ENCODE measurements at regions of chrX and their contacts with region 1.

Region 1: GRCh38 chrX:120499301-120500072 is 30.4 kb upstream of the LAMP2 start:
- DNase-seq: no peak
- ATAC-seq: no peak
- H3K4me3 ChIP-seq: no peak overlapping the region
- H3K4me3 Mint-ChIP-seq: no peak overlapping the region
- H3K27ac ChIP-seq: no peak overlapping the region
- H3K27ac Mint-ChIP-seq: peak overlapping the region in 1 of 2 donors; percentile 27
- H3K4me1 ChIP-seq: peaks cover 5% of the 10 kb centered on the region
- H3K4me1 Mint-ChIP-seq: peaks cover 6% of the 10 kb centered on the region in 2 donors
- H3K27me3 ChIP-seq: no peaks in the 10 kb centered on the region
- H3K27me3 Mint-ChIP-seq: no peaks in the 10 kb centered on the region
- CTCF ChIP-seq: no peak

Region 2: DNA sequence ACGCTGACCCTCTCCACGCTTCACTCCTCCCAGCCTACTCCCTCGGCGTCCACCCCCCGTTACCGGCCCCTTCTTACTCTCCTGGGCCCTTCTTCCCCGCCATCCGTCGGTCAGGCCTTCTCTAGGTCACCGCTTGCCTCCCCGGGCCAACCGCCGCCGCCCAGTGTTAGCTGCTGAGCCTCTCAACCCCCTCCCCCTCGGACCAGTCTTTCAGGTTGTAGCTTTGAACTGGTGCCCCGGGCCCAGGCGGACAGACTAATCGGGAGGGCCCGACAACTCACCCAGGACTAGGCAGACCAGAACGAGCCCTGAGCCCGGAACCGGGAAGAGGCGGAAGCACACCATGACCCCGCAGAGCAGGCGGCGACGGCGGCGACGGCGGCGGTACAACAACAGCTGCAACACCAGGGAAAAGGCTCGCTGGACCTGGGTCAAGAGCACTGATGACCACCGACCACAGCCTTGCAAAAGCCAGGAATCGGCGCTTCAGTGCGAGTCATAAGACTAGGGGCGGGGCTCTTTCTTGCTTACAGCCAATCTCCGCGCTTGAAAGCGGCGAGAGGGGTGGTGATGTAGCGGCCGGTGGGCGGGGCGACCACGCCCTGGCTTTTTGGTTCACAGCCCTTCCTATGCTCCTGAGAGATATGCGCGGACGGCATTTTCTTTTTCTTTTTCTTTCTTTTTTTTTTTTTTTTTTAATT is 30.5 kb before region 1 on chrX and contains the start of gene LAMP2:
- intact Hi-C with region 1: no loop called
- DNase-seq: peak; percentile 74 to 88
- ATAC-seq: peak; percentile 96 to 97 (median 96)
- H3K4me3 ChIP-seq: peak within 1 kb of the TSS; percentile 96
- H3K4me3 Mint-ChIP-seq: peak within 1 kb of the TSS; percentile 91
- H3K27ac ChIP-seq: peak within 1 kb of the TSS; percentile 78
- H3K27ac Mint-ChIP-seq: peak within 1 kb of the TSS; percentile 83 to 88
- H3K4me1 ChIP-seq: peaks cover 11% of the 10 kb centered on the region
- H3K4me1 Mint-ChIP-seq: peaks cover 21 to 29% of the 10 kb centered on the region in 2 donors
- H3K27me3 ChIP-seq: no peaks in the 10 kb centered on the region
- H3K27me3 Mint-ChIP-seq: no peaks in the 10 kb centered on the region
- CTCF ChIP-seq: no peak
- total RNA-seq, gene LAMP2: 33.8 to 45.8 (median 39.1) TPM

Region 3: GRCh38 chrX:120664081-120664480 is 164.6 kb after region 1 on chrX:
- intact Hi-C with region 1: loop called (anchors 2 kb)
- DNase-seq: peak in 1 of 2 donors; percentile 36
- ATAC-seq: no peak
- H3K4me3 ChIP-seq: no peak overlapping the region
- H3K4me3 Mint-ChIP-seq: no peak overlapping the region
- H3K27ac ChIP-seq: no peak overlapping the region
- H3K27ac Mint-ChIP-seq: no peak overlapping the region
- H3K4me1 ChIP-seq: no peaks in the 10 kb centered on the region
- H3K4me1 Mint-ChIP-seq: no peaks in the 10 kb centered on the region
- H3K27me3 ChIP-seq: no peaks in the 10 kb centered on the region
- H3K27me3 Mint-ChIP-seq: no peaks in the 10 kb centered on the region
- CTCF ChIP-seq: no peak

Region 4: GRCh38 chrX:120769576-120770341 is 270.3 kb after region 1 on chrX:
- intact Hi-C with region 1: loop called (anchors 2 kb)
- DNase-seq: peak in 1 of 2 donors; percentile 47
- ATAC-seq: no peak
- H3K4me3 ChIP-seq: no peak overlapping the region
- H3K4me3 Mint-ChIP-seq: no peak overlapping the region
- H3K27ac ChIP-seq: no peak overlapping the region
- H3K27ac Mint-ChIP-seq: no peak overlapping the region
- H3K4me1 ChIP-seq: no peaks in the 10 kb centered on the region
- H3K4me1 Mint-ChIP-seq: no peaks in the 10 kb centered on the region
- H3K27me3 ChIP-seq: no peaks in the 10 kb centered on the region
- H3K27me3 Mint-ChIP-seq: no peaks in the 10 kb centered on the region
- CTCF ChIP-seq: no peak

Measured in natural killer cell (primary cell).